Heart right ventricle (tissue), 16 donors: ENCODE measurements at regions of chr14 and their contacts with region 1.

Region 1: GRCh38 chr14:20682435-20683124 is 1.8 kb upstream of the RNASE4 start:
- DNase-seq: peak; percentile 88 to 93
- ATAC-seq: peak; percentile 89 to 95 (median 92)
- H3K4me3 ChIP-seq: peak overlapping the region; percentile 67 to 99 (median 89)
- H3K27ac ChIP-seq: peak overlapping the region; percentile 98 to 100 (median 100)
- H3K4me1 ChIP-seq: peaks cover 0 to 63% (median 16%) of the 10 kb centered on the region in 9 donors
- H3K27me3 ChIP-seq: no peaks in the 10 kb centered on the region
- CTCF ChIP-seq: peak in 4 of 9 donors; percentile 1 to 45 (median 21)

Region 2: GRCh38 chr14:20327005-20327869 is 355.3 kb before region 1 on chr14:
- intact Hi-C with region 1: loop called in 6 of 10 experiments (anchors 2 to 10 kb)
- DNase-seq: peak in 1 of 2 donors; percentile 46
- ATAC-seq: peak in 3 of 8 donors; percentile 54 to 64 (median 55)
- H3K4me3 ChIP-seq: no peak overlapping the region
- H3K27ac ChIP-seq: peak overlapping the region in 3 of 10 donors; percentile 3 to 47 (median 6)
- H3K4me1 ChIP-seq: peaks cover 0 to 36% (median 23%) of the 10 kb centered on the region in 9 donors
- H3K27me3 ChIP-seq: no peaks in the 10 kb centered on the region
- CTCF ChIP-seq: peak; percentile 57 to 90 (median 81)

Region 3: DNA sequence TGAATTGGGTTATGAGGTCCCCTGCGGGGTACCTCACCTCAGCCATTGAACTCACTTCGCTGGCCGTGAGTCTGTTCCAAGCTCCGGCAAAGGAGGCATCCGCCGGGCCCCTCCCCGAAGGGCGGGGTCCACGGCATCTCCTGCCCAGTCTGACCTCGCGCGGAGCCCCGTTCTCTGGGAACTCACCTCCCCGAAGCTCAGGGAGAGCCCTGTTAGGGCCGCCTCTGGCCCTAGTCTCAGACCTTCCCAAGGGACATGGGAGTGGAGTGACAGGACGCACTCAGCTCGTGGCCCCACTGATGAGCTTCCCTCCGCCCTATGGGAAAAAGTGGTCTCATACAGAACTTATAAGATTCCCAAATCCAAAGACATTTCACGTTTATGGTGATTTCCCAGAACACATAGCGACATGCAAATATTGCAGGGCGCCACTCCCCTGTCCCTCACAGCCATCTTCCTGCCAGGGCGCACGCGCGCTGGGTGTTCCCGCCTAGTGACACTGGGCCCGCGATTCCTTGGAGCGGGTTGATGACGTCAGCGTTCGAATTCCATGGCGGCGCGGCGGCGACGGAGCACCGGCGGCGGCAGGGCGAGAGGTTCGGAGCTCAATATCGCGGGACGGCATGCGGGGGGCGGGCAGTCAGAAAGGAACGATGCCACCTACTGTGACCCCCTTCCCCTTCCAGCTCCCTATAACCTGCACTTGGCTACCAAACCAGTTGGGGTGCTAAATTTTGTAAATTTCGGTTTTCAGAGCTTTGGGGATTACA is 339.3 kb before region 1 on chr14 and contains the start of gene PARP2:
- intact Hi-C with region 1: loop called in 5 of 10 experiments (anchors 2 to 10 kb)
- DNase-seq: peak; percentile 96 to 97
- ATAC-seq: peak; percentile 98 to 99 (median 98)
- H3K4me3 ChIP-seq: peak within 1 kb of the TSS; percentile 55 to 87 (median 68)
- H3K27ac ChIP-seq: peak within 1 kb of the TSS; percentile 67 to 94 (median 89)
- H3K4me1 ChIP-seq: peaks cover 0 to 16% (median 7%) of the 10 kb centered on the region in 9 donors
- H3K27me3 ChIP-seq: no peaks in the 10 kb centered on the region
- CTCF ChIP-seq: peak in 1 of 9 donors; percentile 5
- total RNA-seq, gene PARP2: 13.6 to 18.4 (median 16.0) TPM

Region 4: GRCh38 chr14:20461274-20462001 is 221.1 kb before region 1 on chr14 and contains the start of gene PIP4P1:
- intact Hi-C with region 1: loop called in 5 of 10 experiments (anchors 5 to 10 kb)
- DNase-seq: peak; percentile 97 to 99
- ATAC-seq: peak; percentile 96 to 99 (median 98)
- H3K4me3 ChIP-seq: peak within 1 kb of the TSS; percentile 81 to 100 (median 94)
- H3K27ac ChIP-seq: peak within 1 kb of the TSS; percentile 77 to 96 (median 93)
- H3K4me1 ChIP-seq: peaks cover 9 to 49% (median 24%) of the 10 kb centered on the region in 9 donors
- H3K27me3 ChIP-seq: no peaks in the 10 kb centered on the region
- CTCF ChIP-seq: no peak
- total RNA-seq, gene PIP4P1: 15.5 to 25.3 (median 18.7) TPM

Region 5: DNA sequence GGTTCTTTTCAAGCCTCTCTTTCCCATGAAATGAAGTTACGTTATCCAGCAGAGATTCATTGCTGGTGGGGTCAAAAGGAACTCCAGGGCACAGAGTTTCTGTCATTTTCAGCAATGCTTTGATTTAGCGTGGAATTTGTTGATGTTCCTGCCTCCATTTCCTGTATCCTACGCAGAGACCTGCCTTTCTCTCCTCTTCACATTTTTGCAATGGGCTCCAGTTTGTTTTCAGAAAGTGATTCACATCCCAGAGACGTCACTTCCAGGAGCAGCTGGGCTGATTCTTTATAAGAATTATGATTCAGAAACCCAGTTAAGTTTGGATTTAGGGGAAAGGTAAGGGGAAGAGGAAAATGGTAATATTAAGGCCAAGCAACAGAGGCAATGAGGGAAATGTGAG is 165.7 kb before region 1 on chr14:
- intact Hi-C with region 1: no loop called
- DNase-seq: no peak
- ATAC-seq: peak in 1 of 8 donors; percentile 9
- H3K4me3 ChIP-seq: no peak overlapping the region
- H3K27ac ChIP-seq: peak overlapping the region in 1 of 10 donors; percentile 70
- H3K4me1 ChIP-seq: peaks cover 0 to 5% (median 0%) of the 10 kb centered on the region in 9 donors
- H3K27me3 ChIP-seq: peaks cover 0 to 8% (median 0%) of the 10 kb centered on the region in 7 donors
- CTCF ChIP-seq: no peak

Region 6: GRCh38 chr14:20530771-20531571 is 151.6 kb before region 1 on chr14:
- intact Hi-C with region 1: loop called in 1 of 10 experiments (anchors 10 kb)
- DNase-seq: peak; percentile 58 to 60
- ATAC-seq: no peak
- H3K4me3 ChIP-seq: no peak overlapping the region
- H3K27ac ChIP-seq: no peak overlapping the region
- H3K4me1 ChIP-seq: peaks cover 0 to 5% (median 0%) of the 10 kb centered on the region in 9 donors
- H3K27me3 ChIP-seq: peaks cover 0 to 5% (median 0%) of the 10 kb centered on the region in 7 donors
- CTCF ChIP-seq: peak; percentile 30 to 74 (median 65)

Region 7: DNA sequence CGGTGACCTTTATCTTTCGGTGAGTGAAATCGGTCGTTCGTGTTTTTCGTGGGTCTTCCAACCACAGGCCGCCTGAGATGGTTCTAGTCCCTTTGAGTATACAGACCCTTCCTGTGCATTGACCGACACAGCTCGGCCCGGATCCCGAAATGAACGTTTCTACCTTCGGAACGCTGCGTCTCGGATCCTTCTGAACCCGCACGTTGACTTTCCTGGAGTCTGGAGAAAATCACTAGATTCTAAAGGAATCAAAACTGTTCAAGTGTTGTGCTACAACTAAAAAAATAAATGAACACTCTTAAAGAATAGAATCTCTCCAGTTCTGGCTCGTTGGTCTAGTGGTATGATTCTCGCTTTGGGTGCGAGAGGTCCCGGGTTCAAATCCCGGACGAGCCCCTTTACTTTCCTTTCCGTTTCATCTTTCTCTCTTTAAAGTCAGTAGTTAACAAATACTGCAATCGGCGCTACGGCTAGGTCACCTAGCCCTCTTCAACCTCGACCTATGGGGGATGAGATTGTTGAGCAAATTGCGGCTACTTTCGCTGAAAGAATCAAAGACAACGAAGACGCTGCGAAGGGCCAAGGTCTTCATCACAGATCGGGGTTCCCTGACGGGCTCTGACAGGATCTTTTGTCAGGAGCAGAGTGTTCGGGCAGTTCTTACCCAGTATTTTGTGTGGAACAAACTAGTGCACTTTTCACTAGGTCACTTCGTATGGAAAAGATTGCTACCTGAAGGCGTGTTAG is 49.7 kb before region 1 on chr14:
- intact Hi-C with region 1: loop called in 6 of 10 experiments (anchors 5 kb)
- DNase-seq: no peak
- ATAC-seq: peak; percentile 7 to 85 (median 60)
- H3K4me3 ChIP-seq: peak overlapping the region in 8 of 10 donors; percentile 2 to 45 (median 30)
- H3K27ac ChIP-seq: no peak overlapping the region
- H3K4me1 ChIP-seq: peaks cover 0 to 37% (median 23%) of the 10 kb centered on the region in 9 donors
- H3K27me3 ChIP-seq: peaks cover 0 to 100% (median 58%) of the 10 kb centered on the region in 7 donors
- CTCF ChIP-seq: no peak

Region 8: DNA sequence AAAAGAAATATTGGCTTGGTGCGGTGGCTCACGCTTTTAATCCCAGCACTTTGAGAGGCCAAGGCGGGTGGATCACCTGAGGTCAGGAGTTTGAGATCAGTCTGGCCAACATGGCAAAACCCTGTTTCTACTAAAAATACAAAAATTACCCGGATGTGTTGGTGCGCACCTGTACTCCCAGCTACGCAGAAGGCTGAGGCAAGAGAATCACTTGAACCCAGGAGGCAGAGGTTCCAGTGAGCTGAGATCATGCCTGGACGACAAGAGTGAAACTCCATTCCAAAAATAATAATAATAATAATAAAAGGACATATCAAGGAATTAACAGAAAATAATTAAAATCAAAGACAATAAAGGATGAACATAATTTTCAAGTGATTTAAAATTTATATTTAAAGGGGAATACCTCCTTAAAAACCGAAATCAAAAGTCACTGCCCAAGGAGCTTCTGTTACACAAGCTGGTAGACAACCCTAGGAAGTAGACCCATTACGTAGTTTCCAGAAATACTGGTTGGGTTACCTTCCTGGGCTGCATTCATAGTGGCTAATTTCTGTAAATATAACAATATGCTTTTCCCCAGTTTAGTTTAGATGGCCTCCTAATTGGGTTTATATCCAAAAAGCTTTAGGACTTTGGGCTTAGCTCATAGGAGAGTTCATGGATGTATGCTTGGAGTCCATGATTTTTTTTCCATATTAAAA is 60.8 kb after region 1 on chr14:
- intact Hi-C with region 1: no loop called
- DNase-seq: no peak
- ATAC-seq: no peak
- H3K4me3 ChIP-seq: no peak overlapping the region
- H3K27ac ChIP-seq: no peak overlapping the region
- H3K4me1 ChIP-seq: peaks cover 0 to 6% (median 0%) of the 10 kb centered on the region in 9 donors
- H3K27me3 ChIP-seq: no peaks in the 10 kb centered on the region
- CTCF ChIP-seq: no peak